ENCODE measurements at regions of chr3 and their contacts with region 1.

Region 1: DNA sequence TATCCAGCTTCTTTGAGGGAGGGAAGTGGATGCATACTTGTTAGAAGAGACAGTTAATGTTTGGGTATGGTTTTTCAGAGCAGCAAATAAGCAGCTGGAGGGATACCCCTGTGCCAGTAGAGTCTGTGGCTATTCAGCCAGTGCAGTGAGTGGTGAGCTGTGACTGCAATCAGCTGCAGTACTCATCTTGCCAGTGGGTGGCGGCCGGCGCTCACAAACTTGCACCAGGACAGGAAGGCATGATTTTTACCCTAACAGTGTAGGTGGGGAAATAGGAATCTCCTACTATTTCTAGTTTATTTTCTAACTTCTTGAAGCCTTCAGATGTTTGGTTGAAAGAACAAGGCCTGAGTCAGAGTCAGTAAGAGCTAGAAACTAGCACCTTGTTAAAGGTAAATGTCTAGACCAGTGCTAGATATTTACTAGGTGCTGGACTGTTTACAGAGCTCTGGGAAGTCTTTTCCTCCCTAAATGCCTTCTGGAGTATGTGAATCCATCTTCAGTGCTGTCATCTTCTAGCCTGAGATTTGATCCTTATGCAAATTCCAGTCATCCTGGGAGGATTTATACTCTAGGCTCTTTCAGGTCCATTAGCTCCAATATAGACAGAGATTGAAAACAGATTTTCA is 23.6 kb downstream of the TIMP4 start:
- DNase-seq: no peak
- ATAC-seq: peak; percentile 94
- H3K4me3 ChIP-seq: no peak overlapping the region
- H3K27ac ChIP-seq: peak overlapping the region; percentile 61; the same call in 1 of the 2 replicates
- H3K4me1 ChIP-seq: peaks cover 5% of the 10 kb centered on the region; the same call in 1 of the 2 replicates
- H3K27me3 ChIP-seq: no peaks in the 10 kb centered on the region
- CTCF ChIP-seq: peak; percentile 90

Region 2: DNA sequence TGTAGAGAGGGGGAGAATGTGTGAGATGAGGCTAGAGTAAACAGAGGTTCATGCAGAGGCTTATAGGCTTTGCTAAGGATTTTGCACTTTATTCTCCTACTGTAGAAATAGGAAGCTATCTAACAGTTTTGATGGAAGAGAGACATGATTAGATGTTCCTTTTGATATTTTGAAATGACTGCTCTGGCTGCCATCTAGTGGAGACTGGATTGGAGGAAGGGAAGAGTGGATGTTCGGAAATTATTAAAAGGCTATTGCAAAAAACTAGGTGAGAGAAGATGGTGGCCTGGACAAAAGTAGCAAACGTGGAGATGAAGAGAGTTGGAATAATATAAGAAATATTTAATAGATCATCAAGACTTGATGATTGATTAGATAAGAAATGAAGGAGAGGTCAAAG is 88.7 kb before region 1 on chr3:
- CTCF ChIA-PET with region 1: interaction called, 11 read pairs
- POLR2A ChIA-PET with region 1: no interaction called
- in situ Hi-C with region 1: no loop called
- intact Hi-C with region 1: no loop called
- DNase-seq: no peak
- ATAC-seq: no peak
- H3K4me3 ChIP-seq: no peak overlapping the region
- H3K27ac ChIP-seq: no peak overlapping the region
- H3K4me1 ChIP-seq: no peaks in the 10 kb centered on the region
- H3K27me3 ChIP-seq: 0 out of 2 replicates have a peak, but pooled peaks cover 2% of the 10 kb centered on the region
- CTCF ChIP-seq: peak; percentile 57; the same call in 1 of the 2 replicates

Region 3: DNA sequence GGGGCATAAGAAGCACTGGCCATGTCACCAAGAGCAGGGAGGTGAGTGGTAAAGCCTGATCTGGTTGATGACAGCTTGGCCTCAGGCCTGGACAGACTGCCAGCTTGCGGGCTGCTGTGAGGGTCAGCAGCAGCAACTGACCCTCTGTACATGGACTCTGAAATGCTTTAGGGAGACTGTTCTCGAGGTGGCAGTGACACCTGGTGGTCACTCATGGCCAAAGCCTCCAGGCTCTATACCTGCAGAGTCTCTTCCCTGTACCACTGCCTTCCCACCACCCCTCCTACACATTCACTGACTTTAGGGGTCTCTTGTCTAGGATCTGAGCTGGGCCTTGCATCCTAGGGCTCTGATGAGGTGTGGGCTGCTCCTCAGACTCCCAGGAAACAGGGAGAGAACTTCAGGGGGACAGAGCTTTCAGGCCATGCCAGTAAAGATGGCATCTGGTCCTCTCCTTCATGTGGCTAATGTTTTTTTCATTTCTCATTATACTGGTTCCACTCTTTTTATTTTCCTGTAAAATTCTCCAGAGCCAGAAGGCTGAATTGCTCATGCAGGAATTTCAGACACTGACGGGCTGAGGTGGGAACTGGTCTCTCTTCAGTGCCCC is 40.8 kb after region 1 on chr3:
- CTCF ChIA-PET with region 1: interaction called, 3 read pairs
- POLR2A ChIA-PET with region 1: no interaction called
- in situ Hi-C with region 1: no loop called
- intact Hi-C with region 1: loop called (anchors 5 kb)
- DNase-seq: peak; percentile 48
- ATAC-seq: peak; percentile 94
- H3K4me3 ChIP-seq: no peak overlapping the region
- H3K27ac ChIP-seq: peak overlapping the region; percentile 18; the same call in 1 of the 2 replicates
- H3K4me1 ChIP-seq: no peaks in the 10 kb centered on the region
- H3K27me3 ChIP-seq: no peaks in the 10 kb centered on the region
- CTCF ChIP-seq: peak; percentile 83

Region 4: GRCh38 chr3:12287727-12288191 is 152.6 kb after region 1 on chr3:
- CTCF ChIA-PET with region 1: no interaction called
- POLR2A ChIA-PET with region 1: no interaction called
- in situ Hi-C with region 1: no loop called
- intact Hi-C with region 1: loop called (anchors 10 kb)
- DNase-seq: no peak
- ATAC-seq: peak; percentile 53
- H3K4me3 ChIP-seq: peak overlapping the region; percentile 64 to 76
- H3K27ac ChIP-seq: peak overlapping the region; percentile 93; the same call in 1 of the 2 replicates
- H3K4me1 ChIP-seq: peaks cover 8% of the 10 kb centered on the region
- H3K27me3 ChIP-seq: no peaks in the 10 kb centered on the region
- CTCF ChIP-seq: peak; percentile 14; the same call in 1 of the 2 replicates

Region 5: GRCh38 chr3:12479919-12480425 is 344.8 kb after region 1 on chr3:
- CTCF ChIA-PET with region 1: interaction called, 6 read pairs
- POLR2A ChIA-PET with region 1: no interaction called
- in situ Hi-C with region 1: no loop called
- intact Hi-C with region 1: loop called (anchors 2 kb)
- DNase-seq: no peak
- ATAC-seq: peak; percentile 65
- H3K4me3 ChIP-seq: no peak overlapping the region
- H3K27ac ChIP-seq: peak overlapping the region; percentile 92
- H3K4me1 ChIP-seq: peaks cover 30% of the 10 kb centered on the region
- H3K27me3 ChIP-seq: no peaks in the 10 kb centered on the region
- CTCF ChIP-seq: peak; percentile 71